Activated CD4-positive, alpha-beta T cell treated with anti-CD3 and anti-CD28 coated beads for 36 hours (primary cell): ENCODE measurements at regions of chr22 and their contacts with region 1.

Region 1: DNA sequence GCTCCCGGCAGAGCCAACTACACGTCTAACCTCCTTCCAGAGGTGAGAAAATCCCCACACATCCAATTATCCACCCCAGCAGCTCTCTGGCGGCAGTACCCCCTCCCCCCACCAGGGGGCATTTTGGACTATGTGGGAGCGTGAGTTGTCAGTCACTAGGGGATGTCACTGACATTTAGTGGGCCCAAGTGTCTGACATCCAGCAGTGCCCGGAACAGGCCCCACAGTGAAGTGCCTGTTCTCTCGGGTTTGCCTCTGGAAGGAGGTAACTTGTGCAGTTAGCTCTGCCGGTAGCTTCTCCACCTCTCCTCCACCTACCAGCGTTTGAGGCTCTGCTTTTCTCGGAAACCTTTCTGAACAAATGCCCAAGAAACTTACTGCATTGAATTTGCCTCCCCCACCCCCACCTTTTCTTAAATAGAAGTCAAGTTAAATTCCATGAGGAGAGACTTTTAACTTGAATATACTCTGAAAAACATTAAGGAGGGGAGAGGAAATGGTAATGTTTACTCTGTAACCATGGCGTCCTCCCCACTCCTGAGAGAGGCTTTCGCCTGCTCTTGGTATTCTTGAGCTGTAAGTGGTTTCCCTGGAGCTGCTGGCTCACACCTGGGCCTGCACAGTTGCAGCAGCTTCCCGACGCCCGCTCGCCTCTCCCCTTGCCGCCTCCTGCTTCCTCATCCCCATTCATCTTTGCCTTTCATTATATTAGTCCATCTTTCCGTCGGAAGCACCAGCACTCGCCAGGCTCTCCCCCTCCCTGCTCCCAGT is 112.8 kb downstream of the WNT7B start:
- DNase-seq: peak; percentile 85
- ATAC-seq: peak; percentile 73
- H3K4me3 Mint-ChIP-seq: no peak overlapping the region
- H3K27ac Mint-ChIP-seq: no peak overlapping the region
- H3K4me1 Mint-ChIP-seq: peaks cover 10% of the 10 kb centered on the region
- H3K27me3 Mint-ChIP-seq: peaks cover 34% of the 10 kb centered on the region

Region 2: DNA sequence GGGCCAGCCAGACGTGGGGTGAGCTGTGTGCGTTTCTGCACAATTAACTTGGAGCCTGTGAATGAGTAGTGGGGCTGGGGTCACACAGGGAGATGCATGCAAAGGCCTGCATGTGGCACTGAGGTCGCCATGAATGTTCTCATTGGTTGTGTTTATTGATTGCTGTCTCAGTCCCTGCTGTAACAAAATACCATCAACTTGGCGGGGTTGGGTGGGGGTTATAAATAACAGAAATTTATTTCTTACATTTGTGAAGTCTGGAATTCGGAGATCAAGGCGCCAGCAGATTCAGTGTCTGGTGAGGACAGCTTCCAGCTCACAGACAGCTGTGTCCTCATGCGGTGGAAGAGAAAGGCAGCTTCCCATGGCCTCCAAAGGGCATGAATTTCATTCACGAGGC is 825.0 kb before region 1 on chr22:
- CTCF ChIA-PET with region 1: no interaction called
- POLR2A ChIA-PET with region 1: no interaction called
- intact Hi-C with region 1: no loop called
- DNase-seq: no peak
- ATAC-seq: no peak
- H3K4me3 Mint-ChIP-seq: no peak overlapping the region
- H3K27ac Mint-ChIP-seq: no peak overlapping the region
- H3K4me1 Mint-ChIP-seq: no peaks in the 10 kb centered on the region
- H3K27me3 Mint-ChIP-seq: peaks cover 16% of the 10 kb centered on the region

Region 3: GRCh38 chr22:45577746-45578523 is 286.2 kb before region 1 on chr22:
- CTCF ChIA-PET with region 1: interaction called, 9 read pairs
- POLR2A ChIA-PET with region 1: no interaction called
- intact Hi-C with region 1: loop called (anchors 2 to 5 kb)
- DNase-seq: peak; percentile 89
- ATAC-seq: peak; percentile 71
- H3K4me3 Mint-ChIP-seq: no peak overlapping the region
- H3K27ac Mint-ChIP-seq: no peak overlapping the region
- H3K4me1 Mint-ChIP-seq: no peaks in the 10 kb centered on the region
- H3K27me3 Mint-ChIP-seq: peaks cover 11% of the 10 kb centered on the region

Region 4: DNA sequence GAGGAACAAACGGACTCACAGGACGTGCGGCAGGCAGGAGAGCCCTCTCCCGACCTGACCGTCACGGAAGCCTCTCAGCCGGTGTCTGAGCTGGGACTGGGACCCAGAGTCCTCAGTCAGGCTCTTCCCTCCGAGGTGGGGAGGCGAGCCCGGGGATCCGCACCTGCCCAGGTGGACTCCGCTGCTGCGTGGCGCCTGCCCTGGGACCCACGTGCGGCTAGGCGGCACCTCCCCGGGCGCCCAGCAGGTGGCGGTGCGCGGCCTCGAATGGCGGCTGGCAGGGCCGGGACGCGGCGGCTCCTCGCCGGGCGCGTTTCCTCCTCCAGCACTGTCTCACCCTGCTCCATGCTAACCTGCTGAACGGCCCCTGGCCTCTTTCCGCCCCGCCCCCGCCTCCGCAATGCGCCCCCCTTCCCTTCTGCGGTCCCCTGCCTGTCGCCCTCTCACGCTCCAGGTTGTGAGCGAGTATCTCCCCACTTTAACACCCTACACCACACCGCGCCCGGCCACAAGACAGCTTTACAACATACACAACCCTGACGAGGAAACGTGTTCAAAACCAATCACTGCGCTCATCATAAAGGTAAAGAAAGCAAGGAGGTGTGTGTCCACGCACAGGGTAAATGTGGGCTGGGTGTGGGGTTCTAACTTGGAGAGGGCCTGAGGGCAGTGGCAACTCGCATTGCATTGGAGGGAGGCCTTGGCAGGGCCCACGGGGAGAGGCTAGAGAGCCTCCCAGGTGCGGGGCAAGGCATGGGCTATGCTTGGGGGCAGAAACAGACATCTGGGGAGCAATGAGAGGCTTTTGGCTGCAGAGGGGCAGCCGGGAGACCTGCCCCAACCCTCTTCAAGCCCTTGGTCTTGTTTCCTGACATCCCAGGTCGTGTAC is 218.4 kb before region 1 on chr22:
- CTCF ChIA-PET with region 1: interaction called, 4 read pairs
- POLR2A ChIA-PET with region 1: no interaction called
- intact Hi-C with region 1: loop called (anchors 1 kb)
- DNase-seq: peak; percentile 88
- ATAC-seq: peak; percentile 96
- H3K4me3 Mint-ChIP-seq: no peak overlapping the region
- H3K27ac Mint-ChIP-seq: no peak overlapping the region
- H3K4me1 Mint-ChIP-seq: peaks cover 3% of the 10 kb centered on the region
- H3K27me3 Mint-ChIP-seq: peaks cover 41% of the 10 kb centered on the region

Region 5: DNA sequence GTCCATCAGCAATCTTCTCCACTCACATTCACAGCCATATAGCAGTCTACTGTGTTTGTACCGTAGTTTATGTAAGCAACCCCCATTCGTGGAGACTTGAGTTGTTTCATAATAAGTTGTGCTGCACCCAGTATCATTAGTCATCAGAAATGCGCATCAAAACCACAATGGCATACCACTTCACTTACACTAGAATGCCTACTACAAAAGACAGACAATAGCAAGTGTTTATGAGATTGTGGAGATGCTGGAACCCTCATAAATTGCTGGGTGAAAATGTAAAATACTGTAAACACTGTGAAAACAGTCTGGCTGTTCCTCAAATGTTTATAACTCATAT is 59.2 kb before region 1 on chr22:
- CTCF ChIA-PET with region 1: no interaction called
- POLR2A ChIA-PET with region 1: no interaction called
- intact Hi-C with region 1: no loop called
- DNase-seq: no peak
- ATAC-seq: no peak
- H3K4me3 Mint-ChIP-seq: no peak overlapping the region
- H3K27ac Mint-ChIP-seq: no peak overlapping the region
- H3K4me1 Mint-ChIP-seq: no peaks in the 10 kb centered on the region
- H3K27me3 Mint-ChIP-seq: no peaks in the 10 kb centered on the region

Region 6: DNA sequence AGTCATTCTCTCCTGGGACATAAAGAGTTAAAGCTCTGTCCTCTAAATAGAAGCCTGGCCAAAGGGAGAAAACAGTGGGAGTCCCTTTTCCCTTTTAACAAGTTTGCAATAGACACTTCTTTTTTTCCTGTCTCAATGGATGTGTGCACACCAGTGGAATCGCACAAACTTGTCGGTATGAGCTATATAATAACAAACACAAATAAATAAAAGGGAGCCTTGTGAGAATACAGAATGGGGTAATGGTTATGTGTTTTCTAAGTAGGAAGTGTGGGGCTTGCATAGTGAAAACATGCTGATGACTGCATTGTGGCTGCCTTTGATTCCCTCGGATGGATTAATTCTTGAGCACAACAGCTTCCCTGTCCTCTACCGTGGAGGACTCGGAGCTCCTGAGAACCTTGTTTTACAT is 19.1 kb before region 1 on chr22:
- CTCF ChIA-PET with region 1: interaction called, 15 read pairs
- POLR2A ChIA-PET with region 1: no interaction called
- intact Hi-C with region 1: no loop called
- DNase-seq: no peak
- ATAC-seq: no peak
- H3K4me3 Mint-ChIP-seq: no peak overlapping the region
- H3K27ac Mint-ChIP-seq: no peak overlapping the region
- H3K4me1 Mint-ChIP-seq: no peaks in the 10 kb centered on the region
- H3K27me3 Mint-ChIP-seq: no peaks in the 10 kb centered on the region

Region 7: DNA sequence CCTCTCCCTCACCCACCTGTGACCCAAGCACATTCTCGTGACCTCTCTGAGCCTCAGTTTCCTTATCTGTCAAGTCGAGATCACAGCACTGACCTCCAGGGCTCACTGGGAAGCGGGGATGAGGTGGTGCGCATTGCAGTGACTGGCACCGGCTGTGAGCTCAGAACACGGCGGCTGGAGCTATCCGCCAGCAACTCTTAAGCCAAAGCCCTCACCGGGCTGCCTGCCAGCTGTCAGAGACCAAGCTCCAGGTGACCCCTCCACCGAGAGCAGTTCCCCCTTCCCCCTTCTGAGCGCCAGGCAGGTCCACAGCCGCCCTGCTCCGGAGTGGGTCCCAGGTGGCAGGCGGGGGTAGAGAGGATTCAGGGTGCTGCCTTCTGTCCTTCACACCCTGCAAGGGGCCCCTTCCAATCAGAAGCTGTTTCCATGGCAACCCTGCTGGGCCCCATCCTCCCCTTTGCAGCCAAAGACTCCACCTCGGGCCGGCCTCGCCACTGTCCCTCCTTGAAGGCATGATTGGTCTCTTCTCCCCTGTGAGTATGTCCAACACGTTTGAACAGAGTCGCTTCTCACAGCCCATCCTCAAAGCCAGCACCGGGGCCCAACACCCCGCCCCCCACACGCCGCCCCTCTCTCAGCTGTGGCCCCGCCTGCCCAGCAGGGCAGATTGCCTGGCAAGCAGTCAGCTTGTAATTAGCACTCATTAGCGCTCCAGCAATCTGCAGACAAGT is 14.1 kb after region 1 on chr22:
- CTCF ChIA-PET with region 1: interaction called, 11 read pairs
- POLR2A ChIA-PET with region 1: no interaction called
- intact Hi-C with region 1: no loop called
- DNase-seq: no peak
- ATAC-seq: no peak
- H3K4me3 Mint-ChIP-seq: no peak overlapping the region
- H3K27ac Mint-ChIP-seq: no peak overlapping the region
- H3K4me1 Mint-ChIP-seq: no peaks in the 10 kb centered on the region
- H3K27me3 Mint-ChIP-seq: peaks cover 18% of the 10 kb centered on the region

Region 8: DNA sequence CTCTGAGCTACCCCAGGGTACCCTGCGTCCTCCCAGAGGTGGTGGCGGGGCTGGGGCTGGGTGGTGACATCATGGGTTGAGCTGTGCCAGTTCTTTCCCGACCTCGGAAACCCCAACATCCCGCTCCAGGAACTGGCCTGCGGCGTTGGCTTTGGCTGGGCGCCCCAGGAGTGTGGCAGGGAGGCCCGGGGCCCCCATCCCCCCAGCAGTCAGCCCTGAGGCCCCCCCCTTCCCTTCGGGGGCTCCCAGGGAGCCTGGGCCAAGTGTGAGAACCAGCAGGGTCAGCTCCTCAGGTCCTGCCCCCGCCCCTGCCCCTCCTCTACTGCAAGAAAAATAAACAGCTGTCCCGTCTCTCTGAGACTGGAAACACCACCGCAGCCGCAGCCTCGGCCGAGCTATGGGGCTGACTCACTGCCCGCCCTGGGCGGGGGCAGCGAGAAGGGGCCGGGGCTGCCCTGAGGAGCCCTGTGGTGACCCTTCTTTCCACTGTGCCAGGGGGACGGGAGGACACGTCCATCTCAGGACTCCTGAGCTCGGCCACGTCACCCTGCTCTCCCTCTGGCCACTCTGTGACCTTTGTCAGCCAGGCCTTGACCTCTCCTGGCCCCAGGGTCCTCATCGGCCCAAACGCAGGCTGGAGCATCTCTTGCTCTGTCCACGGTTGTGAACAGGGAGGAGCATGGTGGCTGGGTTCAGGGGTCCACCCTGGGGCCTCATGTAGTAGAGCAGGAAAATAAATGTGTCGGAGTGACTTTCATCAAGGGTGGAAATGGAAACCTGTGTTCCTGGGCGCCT is 39.4 kb after region 1 on chr22:
- CTCF ChIA-PET with region 1: interaction called, 12 read pairs
- POLR2A ChIA-PET with region 1: no interaction called
- intact Hi-C with region 1: no loop called
- DNase-seq: no peak
- ATAC-seq: no peak
- H3K4me3 Mint-ChIP-seq: no peak overlapping the region
- H3K27ac Mint-ChIP-seq: no peak overlapping the region
- H3K4me1 Mint-ChIP-seq: no peaks in the 10 kb centered on the region
- H3K27me3 Mint-ChIP-seq: peaks cover 16% of the 10 kb centered on the region

Region 9: GRCh38 chr22:46116491-46116958 is 252.4 kb after region 1 on chr22:
- CTCF ChIA-PET with region 1: no interaction called
- POLR2A ChIA-PET with region 1: no interaction called
- intact Hi-C with region 1: loop called in 1 of 2 experiments (anchors 10 kb)
- DNase-seq: peak; percentile 95
- ATAC-seq: peak; percentile 96
- H3K4me3 Mint-ChIP-seq: no peak overlapping the region
- H3K27ac Mint-ChIP-seq: no peak overlapping the region
- H3K4me1 Mint-ChIP-seq: peaks cover 3% of the 10 kb centered on the region
- H3K27me3 Mint-ChIP-seq: no peaks in the 10 kb centered on the region